Activated naive CD4-positive, alpha-beta T cell treated with anti-CD3 and anti-CD28 coated beads for 36 hours (primary cell): ENCODE measurements at regions of chr2 and their contacts with region 1.

Region 1: DNA sequence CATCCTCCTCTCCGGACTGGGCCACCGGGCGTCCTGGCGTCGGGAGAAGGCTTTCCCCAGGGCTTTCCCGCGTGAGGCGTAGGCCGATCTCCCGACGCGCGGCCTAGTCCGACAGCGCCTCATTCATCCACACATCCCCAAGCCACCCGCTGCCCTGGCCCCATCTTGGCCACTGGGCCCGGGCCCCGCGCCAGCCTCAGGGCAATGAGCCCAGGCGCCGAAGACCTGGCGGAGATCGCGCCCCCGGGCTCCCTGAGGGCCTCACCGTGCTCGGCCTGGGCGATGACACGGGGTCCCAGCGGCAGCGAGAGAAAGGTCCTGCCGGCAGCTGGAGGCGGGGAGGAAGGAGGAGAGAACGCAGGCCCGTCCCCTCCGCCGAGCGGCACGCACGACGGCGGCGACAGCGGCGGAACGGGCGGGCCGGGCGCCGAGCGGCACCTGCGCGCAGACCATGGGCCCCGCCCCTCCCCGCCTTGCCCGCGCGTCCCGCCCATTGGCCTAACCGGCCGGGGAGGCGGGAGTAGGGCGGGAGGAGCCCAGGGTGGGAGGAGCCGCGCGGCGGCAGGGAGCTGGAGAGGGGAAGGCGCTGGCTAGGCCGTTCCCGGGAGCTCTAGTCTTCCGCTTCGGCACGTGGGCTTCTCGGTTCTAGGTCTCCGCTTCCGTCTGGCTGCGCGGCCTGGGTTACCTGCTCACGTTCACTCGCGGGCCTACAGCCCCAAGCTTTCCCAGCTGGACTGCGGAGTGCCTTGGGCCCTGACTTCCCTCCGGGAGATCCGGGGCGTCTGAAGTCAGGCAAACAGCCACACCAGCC is at the start of gene OLA1:
- DNase-seq: peak; percentile 97
- H3K4me3 Mint-ChIP-seq: peak within 1 kb of the TSS; percentile 84
- H3K27ac Mint-ChIP-seq: peak within 1 kb of the TSS; percentile 79
- H3K4me1 Mint-ChIP-seq: peaks cover 25% of the 10 kb centered on the region
- H3K27me3 Mint-ChIP-seq: no peaks in the 10 kb centered on the region
- total RNA-seq, gene OLA1: 140 to 142 TPM

Region 2: DNA sequence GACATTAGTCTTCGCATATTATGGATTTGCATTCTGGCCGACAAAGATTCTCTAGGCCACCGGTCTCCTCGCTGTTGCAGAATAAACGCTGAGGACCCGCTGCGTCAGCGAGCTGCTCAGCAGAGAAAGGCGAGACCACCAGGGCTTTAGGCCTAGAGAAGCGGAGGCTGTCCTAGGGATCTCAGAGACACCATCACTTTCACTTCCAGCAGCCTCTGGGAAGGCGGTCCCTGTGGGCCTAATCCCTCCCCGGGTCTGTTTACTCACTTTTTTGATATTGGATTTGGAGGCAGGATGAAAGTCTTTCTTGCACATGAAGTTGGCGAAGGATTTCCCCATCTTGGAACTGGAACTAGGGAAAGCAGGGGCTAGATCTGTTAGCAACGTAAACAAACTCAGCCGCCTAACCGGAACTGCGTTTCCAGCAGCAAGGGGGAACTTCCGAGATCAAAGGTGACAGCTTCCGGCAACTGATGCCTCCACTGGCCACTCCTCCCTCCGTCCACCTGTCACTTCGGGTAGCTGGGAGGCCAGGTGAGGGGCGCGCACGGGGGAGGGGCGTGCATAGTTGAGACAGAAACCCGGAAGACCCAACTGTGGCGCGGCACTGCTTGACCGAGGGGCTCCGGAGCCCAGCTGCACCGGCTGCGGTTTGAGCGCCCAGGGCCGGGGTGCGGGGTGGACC is 147.0 kb after region 1 on chr2 and contains the start of gene SCRN3:
- CTCF ChIA-PET with region 1: no interaction called
- intact Hi-C with region 1: loop called (anchors 1 kb)
- DNase-seq: peak; percentile 88
- H3K4me3 Mint-ChIP-seq: peak within 1 kb of the TSS; percentile 99
- H3K27ac Mint-ChIP-seq: peak within 1 kb of the TSS; percentile 99
- H3K4me1 Mint-ChIP-seq: peaks cover 38% of the 10 kb centered on the region
- H3K27me3 Mint-ChIP-seq: no peaks in the 10 kb centered on the region
- total RNA-seq, gene SCRN3: 10.7 to 12.3 TPM